Endothelial cell of umbilical vein (primary cell): ENCODE measurements at regions of chr6 and their contacts with region 1.

Region 1: GRCh38 chr6:78436335-78436734 is 431.0 kb upstream of the IRAK1BP1 start:
- DNase-seq: peak; percentile 43
- H3K4me3 ChIP-seq: no peak overlapping the region
- H3K27ac ChIP-seq: no peak overlapping the region
- H3K4me1 ChIP-seq: no peaks in the 10 kb centered on the region
- H3K27me3 ChIP-seq: no peaks in the 10 kb centered on the region
- CTCF ChIP-seq: peak; percentile 28 to 29
- POLR2A ChIP-seq: no peak

Region 2: DNA sequence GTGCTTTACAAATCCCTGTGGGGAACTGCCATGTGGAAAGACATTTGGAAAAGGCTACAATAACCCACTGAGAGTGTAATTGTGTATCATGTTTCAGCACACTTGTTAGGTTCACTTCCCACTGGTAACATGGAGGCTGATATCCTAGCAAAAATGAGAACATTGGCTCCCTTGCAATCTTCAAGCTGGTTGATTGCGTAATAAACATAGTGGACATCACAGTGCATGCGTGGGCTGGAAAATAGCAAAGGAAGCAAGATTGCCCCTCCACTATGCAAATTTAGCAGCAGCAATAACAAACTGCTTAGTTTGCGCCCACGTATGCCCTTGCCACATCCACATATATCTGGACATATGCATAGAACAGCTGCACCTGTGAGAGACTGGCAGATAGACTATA is 373.3 kb before region 1 on chr6:
- CTCF ChIA-PET with region 1: no interaction called
- POLR2A ChIA-PET with region 1: no interaction called
- dilution Hi-C with region 1: no loop called
- intact Hi-C with region 1: no loop called
- DNase-seq: no peak
- H3K4me3 ChIP-seq: no peak overlapping the region
- H3K27ac ChIP-seq: no peak overlapping the region
- H3K4me1 ChIP-seq: no peaks in the 10 kb centered on the region
- H3K27me3 ChIP-seq: no peaks in the 10 kb centered on the region
- CTCF ChIP-seq: no peak
- POLR2A ChIP-seq: no peak

Region 3: GRCh38 chr6:78538002-78538401 is 101.7 kb after region 1 on chr6:
- CTCF ChIA-PET with region 1: no interaction called
- POLR2A ChIA-PET with region 1: no interaction called
- dilution Hi-C with region 1: no loop called
- intact Hi-C with region 1: no loop called
- DNase-seq: peak; percentile 27
- H3K4me3 ChIP-seq: no peak overlapping the region
- H3K27ac ChIP-seq: no peak overlapping the region
- H3K4me1 ChIP-seq: peaks cover 23% of the 10 kb centered on the region
- H3K27me3 ChIP-seq: no peaks in the 10 kb centered on the region
- CTCF ChIP-seq: no peak
- POLR2A ChIP-seq: no peak

Region 4: DNA sequence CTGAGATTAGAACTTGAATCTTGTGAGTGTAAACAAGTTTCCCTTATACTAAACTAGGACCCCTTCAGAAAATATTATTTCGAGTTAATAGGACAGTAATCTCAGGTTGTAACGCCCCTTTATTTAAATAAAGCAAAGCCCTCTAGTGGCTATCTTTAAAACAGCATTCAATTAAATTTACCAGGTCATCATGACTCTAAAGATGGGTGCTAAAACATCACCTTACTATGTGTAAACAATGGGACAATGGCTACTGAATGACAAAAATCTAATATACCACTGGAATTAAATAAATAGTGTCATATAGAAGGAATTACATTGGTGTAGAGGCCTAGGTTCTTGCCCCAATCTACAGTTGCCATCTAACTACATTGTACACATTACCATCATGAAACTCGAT is 175.6 kb after region 1 on chr6:
- CTCF ChIA-PET with region 1: interaction called, 4 read pairs
- POLR2A ChIA-PET with region 1: no interaction called
- dilution Hi-C with region 1: no loop called
- intact Hi-C with region 1: loop called (anchors 2 kb)
- DNase-seq: peak; percentile 40
- H3K4me3 ChIP-seq: no peak overlapping the region
- H3K27ac ChIP-seq: no peak overlapping the region
- H3K4me1 ChIP-seq: peaks cover 20% of the 10 kb centered on the region
- H3K27me3 ChIP-seq: no peaks in the 10 kb centered on the region
- CTCF ChIP-seq: peak; percentile 31 to 36
- POLR2A ChIP-seq: no peak

Region 5: DNA sequence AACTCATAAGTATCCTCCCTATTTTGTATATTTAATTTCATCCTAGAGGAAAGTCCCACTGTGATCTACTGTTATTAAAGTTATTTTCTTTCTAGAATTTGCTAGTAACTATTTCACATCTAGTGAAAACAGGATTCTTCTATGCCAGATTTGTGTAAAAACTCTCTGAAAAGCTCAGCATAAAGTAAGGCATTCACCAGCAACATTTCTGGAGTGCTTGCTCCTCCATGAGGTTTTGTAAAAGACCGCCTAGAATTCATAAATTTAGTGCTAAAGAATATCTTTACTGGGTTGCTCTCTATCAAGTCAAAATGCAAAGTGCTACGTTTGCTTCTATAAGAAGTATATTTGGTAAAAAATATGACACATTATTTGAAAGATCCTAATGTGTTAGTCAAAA is 257.5 kb after region 1 on chr6:
- CTCF ChIA-PET with region 1: interaction called, 3 read pairs
- POLR2A ChIA-PET with region 1: no interaction called
- dilution Hi-C with region 1: no loop called
- intact Hi-C with region 1: loop called (anchors 5 kb)
- DNase-seq: no peak
- H3K4me3 ChIP-seq: no peak overlapping the region
- H3K27ac ChIP-seq: no peak overlapping the region
- H3K4me1 ChIP-seq: no peaks in the 10 kb centered on the region
- H3K27me3 ChIP-seq: peaks cover 11 to 14% of the 10 kb centered on the region in 2 experiments
- CTCF ChIP-seq: no peak
- POLR2A ChIP-seq: no peak

Region 6: GRCh38 chr6:78810146-78810545 is 373.8 kb after region 1 on chr6:
- CTCF ChIA-PET with region 1: interaction called, 11 read pairs
- POLR2A ChIA-PET with region 1: no interaction called
- dilution Hi-C with region 1: no loop called
- intact Hi-C with region 1: loop called (anchors 1 kb)
- DNase-seq: peak; percentile 60
- H3K4me3 ChIP-seq: no peak overlapping the region
- H3K27ac ChIP-seq: no peak overlapping the region
- H3K4me1 ChIP-seq: no peaks in the 10 kb centered on the region
- H3K27me3 ChIP-seq: peaks cover 0 to 2% of the 10 kb centered on the region in 2 experiments
- CTCF ChIP-seq: peak; percentile 57 to 64
- POLR2A ChIP-seq: no peak